Activated CD4-positive, alpha-beta memory T cell treated with anti-CD3 and anti-CD28 coated beads, Interleukin-2, amount 10 ng/mL, durations not matched to agents 7 days and 5 days (primary cell): ENCODE measurements at regions of chr9 and their contacts with region 1.

Region 1: GRCh38 chr9:2837915-2838314 is 6.0 kb downstream of the PUM3 start:
- DNase-seq: no peak
- H3K4me3 Mint-ChIP-seq: no peak overlapping the region
- H3K27ac Mint-ChIP-seq: no peak overlapping the region
- H3K4me1 Mint-ChIP-seq: peaks cover 35% of the 10 kb centered on the region
- H3K27me3 Mint-ChIP-seq: no peaks in the 10 kb centered on the region

Region 2: GRCh38 chr9:2621680-2622460 is 216.0 kb before region 1 on chr9 and contains the start of gene VLDLR:
- CTCF ChIA-PET with region 1: no interaction called
- POLR2A ChIA-PET with region 1: interaction called, 11 read pairs
- DNase-seq: peak; percentile 43
- H3K4me3 Mint-ChIP-seq: peak within 1 kb of the TSS; percentile 87
- H3K27ac Mint-ChIP-seq: peak within 1 kb of the TSS; percentile 70
- H3K4me1 Mint-ChIP-seq: peaks cover 26% of the 10 kb centered on the region
- H3K27me3 Mint-ChIP-seq: peaks cover 51% of the 10 kb centered on the region
- total RNA-seq, gene VLDLR: 17.3 to 17.5 TPM